Mammary epithelial cell (primary cell): ENCODE measurements at regions of chr9 and their contacts with region 1.

Region 1: GRCh38 chr9:19568946-19569345 is 160.1 kb downstream of the ACER2 start:
- DNase-seq: no peak
- H3K4me3 ChIP-seq: no peak overlapping the region
- H3K27ac ChIP-seq: no peak overlapping the region
- H3K4me1 ChIP-seq: no peaks in the 10 kb centered on the region
- H3K27me3 ChIP-seq: no peaks in the 10 kb centered on the region
- CTCF ChIP-seq: no peak

Region 2: DNA sequence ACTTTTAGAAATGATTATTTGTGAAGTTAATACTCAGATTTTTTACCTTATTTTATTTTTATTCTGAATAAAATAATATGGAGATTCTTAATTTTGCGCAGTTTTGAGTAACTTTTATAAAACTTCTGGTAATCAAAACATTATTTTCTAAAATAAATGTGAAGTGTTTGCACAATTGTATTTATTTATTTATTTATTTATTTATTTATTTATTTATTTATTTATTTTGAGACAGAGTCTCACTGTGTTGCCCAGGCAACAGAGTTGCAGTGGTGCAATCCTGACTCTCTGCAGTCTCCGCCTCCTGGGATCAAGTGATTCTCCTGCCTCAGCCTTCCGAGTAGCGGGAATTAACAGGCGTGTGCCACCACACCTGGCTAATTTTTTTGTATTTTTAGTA is 262.4 kb before region 1 on chr9:
- CTCF ChIA-PET with region 1: no interaction called
- dilution Hi-C with region 1: no loop called
- in situ Hi-C with region 1: no loop called
- intact Hi-C with region 1: no loop called
- DNase-seq: no peak
- H3K4me3 ChIP-seq: no peak overlapping the region
- H3K27ac ChIP-seq: no peak overlapping the region
- H3K4me1 ChIP-seq: no peaks in the 10 kb centered on the region
- H3K27me3 ChIP-seq: no peaks in the 10 kb centered on the region
- CTCF ChIP-seq: no peak

Region 3: DNA sequence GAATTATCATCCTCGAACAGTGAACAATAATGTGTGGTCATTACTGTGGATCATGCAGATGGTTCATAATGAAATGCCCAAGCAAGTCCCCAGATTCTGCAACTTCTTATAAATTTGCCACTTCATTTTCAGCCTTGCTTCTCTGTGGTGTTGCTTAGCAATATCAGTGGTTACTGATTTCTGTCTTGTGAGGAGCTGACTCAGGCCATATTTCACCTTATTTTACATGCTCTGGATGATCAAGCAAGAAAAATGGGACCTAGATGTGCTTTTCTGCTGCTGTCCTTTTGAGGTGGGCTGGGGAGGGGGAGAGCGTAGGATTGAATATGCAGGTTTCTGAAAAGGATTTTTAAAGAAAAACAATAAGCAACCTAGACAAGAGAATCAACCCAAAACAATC is 31.6 kb after region 1 on chr9:
- CTCF ChIA-PET with region 1: no interaction called
- dilution Hi-C with region 1: loop called (anchors 5 kb)
- in situ Hi-C with region 1: no loop called
- intact Hi-C with region 1: no loop called
- DNase-seq: no peak
- H3K4me3 ChIP-seq: no peak overlapping the region
- H3K27ac ChIP-seq: no peak overlapping the region
- H3K4me1 ChIP-seq: no peaks in the 10 kb centered on the region
- H3K27me3 ChIP-seq: no peaks in the 10 kb centered on the region
- CTCF ChIP-seq: no peak